ENCODE measurements at regions of chr22 and their contacts with region 1.

Region 1: GRCh38 chr22:29359469-29359868 is 28.9 kb downstream of the AP1B1 start:
- DNase-seq: peak; percentile 85
- H3K4me3 ChIP-seq: no peak overlapping the region
- H3K27ac ChIP-seq: peak overlapping the region in 3 of 4 donors; percentile 28 to 50 (median 49)
- H3K4me1 ChIP-seq: peaks cover 0 to 33% (median 23%) of the 10 kb centered on the region in 4 donors
- H3K27me3 ChIP-seq: no peaks in the 10 kb centered on the region
- CTCF ChIP-seq: peak; percentile 53 to 81 (median 70)
- EP300 ChIP-seq: no peak
- POLR2A ChIP-seq: no peak

Region 2: GRCh38 chr22:29306175-29306834 is 53.2 kb before region 1 on chr22 and contains the start of gene GAS2L1:
- intact Hi-C with region 1: loop called (anchors 1 kb)
- DNase-seq: peak; percentile 94
- H3K4me3 ChIP-seq: peak within 1 kb of the TSS; percentile 65 to 94 (median 87)
- H3K27ac ChIP-seq: peak within 1 kb of the TSS; percentile 86 to 94 (median 88)
- H3K4me1 ChIP-seq: peaks cover 0 to 65% (median 47%) of the 10 kb centered on the region in 4 donors
- H3K27me3 ChIP-seq: no peaks in the 10 kb centered on the region
- CTCF ChIP-seq: peak; percentile 57 to 81 (median 77)
- EP300 ChIP-seq: no peak
- POLR2A ChIP-seq: no peak
- total RNA-seq, gene GAS2L1: 14.0 to 25.2 (median 19.3) TPM

Region 3: GRCh38 chr22:29344137-29344536 is 15.3 kb before region 1 on chr22:
- intact Hi-C with region 1: loop called (anchors 2 kb)
- DNase-seq: peak; percentile 94
- H3K4me3 ChIP-seq: no peak overlapping the region
- H3K27ac ChIP-seq: peak overlapping the region; percentile 63 to 79 (median 73)
- H3K4me1 ChIP-seq: peaks cover 0 to 51% (median 47%) of the 10 kb centered on the region in 4 donors
- H3K27me3 ChIP-seq: no peaks in the 10 kb centered on the region
- CTCF ChIP-seq: no peak
- EP300 ChIP-seq: peak in 1 of 4 donors; percentile 29
- POLR2A ChIP-seq: no peak

Measured in sigmoid colon (tissue), 7 donors.